Vagina (tissue), 2 donors: ENCODE measurements at regions of chr9 and their contacts with region 1.

Region 1: GRCh38 chr9:131590908-131591844 is 45.9 kb downstream of the PRRT1B start:
- DNase-seq: no peak
- H3K4me3 ChIP-seq: no peak overlapping the region
- H3K27ac ChIP-seq: no peak overlapping the region
- H3K4me1 ChIP-seq: no peaks in the 10 kb centered on the region
- H3K27me3 ChIP-seq: no peaks in the 10 kb centered on the region
- CTCF ChIP-seq: peak; percentile 77 to 90 (median 82)
- POLR2A ChIP-seq: no peak

Region 2: DNA sequence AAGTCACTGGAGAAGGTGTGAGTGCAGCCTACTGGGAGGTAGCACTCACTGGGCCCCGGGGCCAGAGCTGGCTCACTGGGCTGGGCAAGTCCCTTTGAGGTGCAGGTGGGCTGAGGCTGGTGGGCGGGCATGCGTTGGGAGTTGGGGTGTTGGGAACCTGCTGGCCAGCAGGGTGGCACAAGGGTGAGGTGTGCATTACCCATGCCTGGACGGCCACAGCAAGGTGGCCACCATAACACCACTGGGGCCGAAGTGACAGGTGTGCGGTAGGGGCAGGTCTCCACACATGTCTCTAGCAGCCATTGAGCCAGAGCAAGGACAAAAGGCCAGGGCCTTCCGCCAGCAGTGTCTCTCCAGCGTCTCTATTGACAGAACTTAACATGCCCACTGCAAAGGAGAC is 23.3 kb before region 1 on chr9:
- intact Hi-C with region 1: no loop called
- DNase-seq: no peak
- H3K4me3 ChIP-seq: no peak overlapping the region
- H3K27ac ChIP-seq: no peak overlapping the region
- H3K4me1 ChIP-seq: no peaks in the 10 kb centered on the region
- H3K27me3 ChIP-seq: no peaks in the 10 kb centered on the region
- CTCF ChIP-seq: no peak
- POLR2A ChIP-seq: no peak

Region 3: GRCh38 chr9:131739980-131740648 is 148.9 kb after region 1 on chr9 and contains the start of gene RAPGEF1:
- intact Hi-C with region 1: loop called (anchors 5 kb)
- DNase-seq: no peak
- H3K4me3 ChIP-seq: peak within 1 kb of the TSS; percentile 61 to 87
- H3K27ac ChIP-seq: peak within 1 kb of the TSS; percentile 89
- H3K4me1 ChIP-seq: peaks cover 44% of the 10 kb centered on the region
- H3K27me3 ChIP-seq: no peaks in the 10 kb centered on the region
- CTCF ChIP-seq: peak; percentile 58 to 98 (median 76)
- POLR2A ChIP-seq: no peak
- total RNA-seq, gene RAPGEF1: 57.9 TPM

Region 4: GRCh38 chr9:131854896-131855613 is 263.9 kb after region 1 on chr9:
- intact Hi-C with region 1: no loop called
- DNase-seq: no peak
- H3K4me3 ChIP-seq: no peak overlapping the region
- H3K27ac ChIP-seq: no peak overlapping the region
- H3K4me1 ChIP-seq: no peaks in the 10 kb centered on the region
- H3K27me3 ChIP-seq: no peaks in the 10 kb centered on the region
- CTCF ChIP-seq: no peak
- POLR2A ChIP-seq: no peak